ENCODE measurements at regions of chr6 and their contacts with region 1.

Region 1: DNA sequence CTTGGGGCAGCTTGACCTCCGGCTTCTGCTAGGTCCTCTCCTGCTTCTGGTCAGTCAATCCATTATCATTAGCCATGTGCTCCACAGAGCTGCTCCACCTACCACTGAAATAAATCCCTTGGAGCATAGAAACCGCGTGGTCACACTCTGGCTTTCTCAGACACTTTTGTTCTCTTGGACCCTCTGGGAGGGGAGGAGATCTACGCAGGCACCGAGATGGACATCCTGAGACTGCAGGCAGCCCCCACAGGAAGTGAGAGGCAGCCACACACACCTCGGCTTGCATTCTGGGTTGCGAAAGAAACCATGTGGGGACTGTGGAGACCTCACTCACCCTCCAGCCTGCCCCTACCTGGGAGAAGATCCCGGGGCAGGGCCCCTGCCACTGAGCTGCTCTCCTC is 79.5 kb downstream of the FYN start:
- DNase-seq: peak; percentile 33 to 85 (median 54)
- ATAC-seq: peak; percentile 73
- H3K4me3 ChIP-seq: peak overlapping the region; percentile 48 to 62
- H3K4me3 Mint-ChIP-seq: peak overlapping the region; percentile 85
- H3K27ac ChIP-seq: peak overlapping the region; percentile 53 to 75
- H3K27ac Mint-ChIP-seq: peak overlapping the region; percentile 94
- H3K4me1 ChIP-seq: peaks cover 60% of the 10 kb centered on the region
- H3K4me1 Mint-ChIP-seq: peaks cover 71% of the 10 kb centered on the region
- H3K27me3 ChIP-seq: no peaks in the 10 kb centered on the region
- H3K27me3 Mint-ChIP-seq: no peaks in the 10 kb centered on the region
- CTCF ChIP-seq: no peak

Region 2: DNA sequence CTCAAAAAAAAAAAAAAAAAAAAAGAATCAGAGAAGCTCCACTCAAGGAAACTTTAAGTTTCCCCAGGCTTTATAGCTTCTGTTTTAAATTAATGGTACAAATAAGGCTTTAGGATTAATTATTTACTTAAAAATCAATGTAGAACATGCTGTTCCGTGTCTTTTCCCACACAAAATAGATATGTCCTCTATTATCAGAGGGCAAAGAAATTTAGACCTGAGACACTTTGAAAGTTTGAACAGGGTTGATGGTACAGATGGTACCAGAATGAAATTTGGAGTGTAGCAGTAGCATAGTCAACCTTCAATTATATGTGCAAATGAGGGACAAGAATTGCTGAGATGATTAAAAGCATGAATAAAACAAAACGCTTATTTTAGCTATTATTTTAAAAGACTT is 278.5 kb before region 1 on chr6:
- CTCF ChIA-PET with region 1: no interaction called
- POLR2A ChIA-PET with region 1: no interaction called
- intact Hi-C with region 1: no loop called
- DNase-seq: no peak
- ATAC-seq: no peak
- H3K4me3 ChIP-seq: no peak overlapping the region
- H3K4me3 Mint-ChIP-seq: no peak overlapping the region
- H3K27ac ChIP-seq: no peak overlapping the region
- H3K27ac Mint-ChIP-seq: no peak overlapping the region
- H3K4me1 ChIP-seq: no peaks in the 10 kb centered on the region
- H3K4me1 Mint-ChIP-seq: no peaks in the 10 kb centered on the region
- H3K27me3 ChIP-seq: no peaks in the 10 kb centered on the region
- H3K27me3 Mint-ChIP-seq: no peaks in the 10 kb centered on the region
- CTCF ChIP-seq: no peak

Region 3: DNA sequence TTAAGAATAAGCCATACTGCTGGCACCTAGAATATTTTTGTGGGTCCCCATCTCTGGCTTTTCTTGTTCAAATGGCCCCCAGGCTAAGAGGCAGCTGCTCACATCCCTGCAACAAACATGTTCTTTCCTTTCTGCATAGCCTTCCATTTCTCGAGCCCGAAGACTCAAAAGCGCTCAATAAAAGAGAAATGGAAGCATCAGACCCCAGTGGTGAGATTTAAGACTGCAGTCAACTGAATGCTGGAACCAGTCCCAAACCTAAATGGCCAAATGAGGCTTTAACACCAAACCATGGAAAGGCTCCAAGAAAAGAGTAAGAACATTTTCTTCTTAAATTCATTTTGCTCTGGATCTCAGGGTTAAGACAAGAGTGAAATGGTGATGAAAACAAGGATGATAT is 65.9 kb before region 1 on chr6:
- CTCF ChIA-PET with region 1: no interaction called
- POLR2A ChIA-PET with region 1: no interaction called
- intact Hi-C with region 1: loop called (anchors 5 kb)
- DNase-seq: peak in 1 of 9 experiments; percentile 53
- ATAC-seq: no peak
- H3K4me3 ChIP-seq: no peak overlapping the region
- H3K4me3 Mint-ChIP-seq: no peak overlapping the region
- H3K27ac ChIP-seq: peak overlapping the region in 1 of 2 experiments; percentile 47
- H3K27ac Mint-ChIP-seq: no peak overlapping the region
- H3K4me1 ChIP-seq: peaks cover 51% of the 10 kb centered on the region
- H3K4me1 Mint-ChIP-seq: peaks cover 90% of the 10 kb centered on the region
- H3K27me3 ChIP-seq: no peaks in the 10 kb centered on the region
- H3K27me3 Mint-ChIP-seq: no peaks in the 10 kb centered on the region
- CTCF ChIP-seq: peak; percentile 27

Region 4: DNA sequence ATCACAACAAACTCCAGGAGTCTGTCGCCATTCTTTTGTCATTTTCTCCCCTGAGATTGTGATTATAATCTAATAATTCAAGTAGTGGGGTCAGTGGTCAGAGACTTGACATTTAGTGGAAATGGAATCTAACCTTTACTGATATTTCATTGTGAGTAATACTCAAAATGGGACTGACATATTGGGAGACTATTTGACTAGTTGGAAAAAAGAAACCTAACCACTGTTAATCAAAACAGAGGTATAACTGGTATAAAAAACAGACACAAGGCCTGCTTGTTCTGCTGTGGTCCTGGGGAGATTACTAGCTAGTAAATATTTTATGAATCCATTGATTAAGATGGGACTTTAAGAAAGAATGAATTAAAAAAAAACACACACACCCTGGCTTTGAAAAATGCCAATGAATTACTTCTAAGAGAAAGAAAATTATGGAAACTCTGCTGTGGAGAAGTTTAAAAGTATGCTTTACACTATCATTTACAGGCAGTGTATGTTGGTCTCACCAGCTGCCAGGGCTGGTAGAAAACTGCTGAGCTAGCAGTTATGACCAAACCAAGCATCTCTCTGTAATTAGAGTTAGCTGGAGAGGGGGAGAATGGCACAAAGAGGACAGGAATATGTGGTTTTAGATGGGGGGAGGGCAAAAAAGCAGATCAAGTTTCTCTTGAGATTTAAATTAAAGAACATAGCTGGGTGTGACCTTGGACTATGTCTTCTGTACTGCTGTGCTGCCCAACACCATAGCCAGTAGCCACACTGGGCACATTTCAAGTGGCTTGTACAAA is 24.2 kb before region 1 on chr6:
- CTCF ChIA-PET with region 1: interaction called, 4 read pairs
- POLR2A ChIA-PET with region 1: interaction called, 15 read pairs
- intact Hi-C with region 1: loop called in 1 of 2 experiments (anchors 1 kb)
- DNase-seq: no peak
- ATAC-seq: no peak
- H3K4me3 ChIP-seq: no peak overlapping the region
- H3K4me3 Mint-ChIP-seq: peak overlapping the region; percentile 12
- H3K27ac ChIP-seq: peak overlapping the region in 1 of 2 experiments; percentile 99
- H3K27ac Mint-ChIP-seq: peak overlapping the region; percentile 99
- H3K4me1 ChIP-seq: peaks cover 87% of the 10 kb centered on the region
- H3K4me1 Mint-ChIP-seq: peaks cover 93% of the 10 kb centered on the region
- H3K27me3 ChIP-seq: no peaks in the 10 kb centered on the region
- H3K27me3 Mint-ChIP-seq: no peaks in the 10 kb centered on the region
- CTCF ChIP-seq: no peak

Region 5: GRCh38 chr6:111804627-111805235 is 11.0 kb after region 1 on chr6:
- CTCF ChIA-PET with region 1: no interaction called
- POLR2A ChIA-PET with region 1: interaction called, 6 read pairs
- intact Hi-C with region 1: loop called in 1 of 2 experiments (anchors 1 kb)
- DNase-seq: peak; percentile 27 to 92 (median 62)
- ATAC-seq: peak; percentile 73
- H3K4me3 ChIP-seq: no peak overlapping the region
- H3K4me3 Mint-ChIP-seq: peak overlapping the region; percentile 60
- H3K27ac ChIP-seq: peak overlapping the region; percentile 16 to 84
- H3K27ac Mint-ChIP-seq: peak overlapping the region; percentile 97
- H3K4me1 ChIP-seq: peaks cover 70% of the 10 kb centered on the region
- H3K4me1 Mint-ChIP-seq: peaks cover 95% of the 10 kb centered on the region
- H3K27me3 ChIP-seq: no peaks in the 10 kb centered on the region
- H3K27me3 Mint-ChIP-seq: no peaks in the 10 kb centered on the region
- CTCF ChIP-seq: peak; percentile 53

Measured in CD8-positive, alpha-beta T cell (primary cell).